ENCODE measurements at regions of chr6 and their contacts with region 1.

Region 1: GRCh38 chr6:36469148-36469661 is 26.4 kb downstream of the KCTD20 start:
- DNase-seq: peak; percentile 67
- H3K4me3 ChIP-seq: no peak overlapping the region
- H3K27ac ChIP-seq: peak overlapping the region; percentile 57
- H3K4me1 ChIP-seq: peaks cover 23% of the 10 kb centered on the region
- H3K27me3 ChIP-seq: no peaks in the 10 kb centered on the region
- CTCF ChIP-seq: no peak

Region 2: GRCh38 chr6:35427851-35428321 is 1041.3 kb before region 1 on chr6:
- CTCF ChIA-PET with region 1: no interaction called
- POLR2A ChIA-PET with region 1: no interaction called
- intact Hi-C with region 1: no loop called
- DNase-seq: no peak
- H3K4me3 ChIP-seq: no peak overlapping the region
- H3K27ac ChIP-seq: no peak overlapping the region
- H3K4me1 ChIP-seq: no peaks in the 10 kb centered on the region
- H3K27me3 ChIP-seq: no peaks in the 10 kb centered on the region
- CTCF ChIP-seq: no peak

Region 3: DNA sequence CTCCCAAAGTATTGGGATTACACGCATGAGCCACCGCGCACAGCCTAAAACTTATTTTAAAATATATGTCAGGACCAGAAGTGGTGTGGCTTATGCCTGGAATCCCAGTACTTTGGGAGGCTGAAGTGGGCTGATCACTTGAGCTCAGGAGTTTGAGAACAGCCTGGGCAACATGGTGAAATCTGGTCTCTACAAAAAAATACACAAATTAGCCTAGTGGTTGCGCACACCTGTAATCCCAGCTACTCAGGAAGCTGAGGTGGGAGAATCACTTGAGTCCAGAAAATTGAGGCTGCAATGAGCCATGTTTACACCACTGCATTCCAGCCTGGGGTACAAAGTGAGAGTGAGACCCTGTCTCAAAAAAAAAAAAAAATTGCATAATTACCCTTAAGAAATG is 40.3 kb before region 1 on chr6:
- CTCF ChIA-PET with region 1: interaction called, 13 read pairs
- POLR2A ChIA-PET with region 1: no interaction called
- intact Hi-C with region 1: no loop called
- DNase-seq: peak; percentile 32
- H3K4me3 ChIP-seq: no peak overlapping the region
- H3K27ac ChIP-seq: no peak overlapping the region
- H3K4me1 ChIP-seq: no peaks in the 10 kb centered on the region
- H3K27me3 ChIP-seq: no peaks in the 10 kb centered on the region
- CTCF ChIP-seq: peak; percentile 57